ENCODE measurements at regions of chr17 and their contacts with region 1.

Region 1: DNA sequence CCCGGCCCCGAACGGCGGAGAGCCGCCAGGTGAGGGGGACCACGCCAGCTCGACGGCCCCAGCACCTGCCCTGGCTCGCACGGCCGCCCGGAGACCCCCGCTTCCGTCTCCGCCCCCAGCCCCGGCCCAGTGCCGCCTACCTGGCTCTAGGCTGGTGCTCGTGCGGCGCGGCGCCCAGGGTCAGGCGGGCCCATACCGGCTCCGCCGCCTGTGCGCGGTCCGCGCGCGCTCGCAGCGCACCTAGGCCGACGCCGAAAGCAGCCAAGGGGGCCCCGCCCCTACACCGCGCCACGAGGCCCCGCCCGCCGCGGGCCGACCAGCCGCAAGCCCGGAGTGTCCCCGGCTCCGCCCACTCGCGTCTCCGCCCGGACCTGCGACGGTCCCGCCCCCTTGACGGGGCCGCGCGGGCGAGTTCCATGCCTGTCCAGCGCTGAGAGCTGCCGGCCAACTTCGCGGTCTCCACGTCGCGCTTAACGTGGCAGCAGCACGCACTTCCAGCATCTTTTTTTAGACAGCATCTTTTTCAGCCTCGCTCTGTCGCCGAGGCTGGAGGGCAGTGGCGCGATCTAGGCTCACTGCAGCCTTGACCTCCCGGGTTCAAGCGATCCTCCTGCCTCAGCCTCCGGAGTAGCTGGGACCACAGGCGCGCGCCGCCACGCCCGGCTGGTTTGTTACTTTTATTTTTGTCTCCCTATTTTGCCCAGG is at the start of gene SLC25A39:
- DNase-seq: peak; percentile 95
- H3K4me3 Mint-ChIP-seq: peak within 1 kb of the TSS; percentile 87
- H3K27ac Mint-ChIP-seq: peak within 1 kb of the TSS; percentile 89
- H3K4me1 Mint-ChIP-seq: peaks cover 4% of the 10 kb centered on the region
- H3K27me3 Mint-ChIP-seq: no peaks in the 10 kb centered on the region
- total RNA-seq, gene SLC25A39: 132 and 141 TPM in 2 replicates

Region 2: DNA sequence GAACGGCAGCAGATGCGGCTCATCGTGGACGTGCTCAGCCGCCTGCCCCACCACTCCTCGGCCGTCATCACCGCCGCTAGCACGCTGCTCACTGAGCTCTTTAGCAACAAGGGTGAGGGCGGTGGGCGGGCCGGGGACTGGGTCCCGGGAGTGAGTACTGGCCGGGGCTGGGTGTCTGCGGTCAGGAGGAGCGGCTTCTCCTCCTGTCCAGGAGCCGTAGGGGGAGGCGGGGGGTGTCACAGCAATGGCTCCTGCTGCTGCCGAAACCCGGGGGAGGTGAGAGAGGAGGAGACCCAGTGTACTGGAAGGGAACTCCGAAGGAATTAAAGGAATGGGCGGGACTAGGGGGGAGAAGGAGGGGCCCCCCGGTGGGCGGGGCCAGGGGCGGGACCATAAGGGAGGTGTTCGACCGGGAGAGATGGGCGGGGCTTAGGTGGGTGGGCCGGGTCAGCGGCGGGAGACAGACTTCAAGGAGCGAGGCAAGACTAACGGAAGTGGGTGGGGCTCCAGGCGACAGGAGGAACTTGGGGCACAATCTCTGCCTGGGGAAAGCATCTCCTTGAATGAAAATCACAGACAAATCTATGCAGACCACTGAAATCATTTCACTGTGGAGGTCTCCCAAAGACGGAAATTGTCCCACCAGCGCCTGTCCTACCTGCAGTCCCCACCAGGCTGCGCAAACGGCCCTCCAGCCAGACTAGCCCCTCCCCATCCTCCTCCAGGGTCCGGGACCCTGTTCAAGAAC is 318.0 kb before region 1 on chr17:
- intact Hi-C with region 1: loop called (anchors 5 kb)
- DNase-seq: peak; percentile 87
- H3K4me3 Mint-ChIP-seq: peak overlapping the region; percentile 81
- H3K27ac Mint-ChIP-seq: peak overlapping the region; percentile 33
- H3K4me1 Mint-ChIP-seq: peaks cover 13% of the 10 kb centered on the region
- H3K27me3 Mint-ChIP-seq: peaks cover 21% of the 10 kb centered on the region

Region 3: GRCh38 chr17:44123356-44124117 is 201.2 kb before region 1 on chr17 and contains the start of gene HDAC5:
- intact Hi-C with region 1: loop called (anchors 1 kb)
- DNase-seq: peak; percentile 93
- H3K4me3 Mint-ChIP-seq: peak within 1 kb of the TSS; percentile 90
- H3K27ac Mint-ChIP-seq: peak within 1 kb of the TSS; percentile 95
- H3K4me1 Mint-ChIP-seq: peaks cover 17% of the 10 kb centered on the region
- H3K27me3 Mint-ChIP-seq: peaks cover 9% of the 10 kb centered on the region
- total RNA-seq, gene HDAC5: 18.7 and 19.9 TPM in 2 replicates

Region 4: GRCh38 chr17:44141717-44142285 is 182.9 kb before region 1 on chr17 and contains the start of gene HROB:
- intact Hi-C with region 1: loop called (anchors 1 kb)
- DNase-seq: peak; percentile 97
- H3K4me3 Mint-ChIP-seq: peak within 1 kb of the TSS; percentile 91
- H3K27ac Mint-ChIP-seq: peak within 1 kb of the TSS; percentile 94
- H3K4me1 Mint-ChIP-seq: peaks cover 15% of the 10 kb centered on the region
- H3K27me3 Mint-ChIP-seq: no peaks in the 10 kb centered on the region
- total RNA-seq, gene HROB: 20.7 and 24.1 TPM in 2 replicates

Region 5: GRCh38 chr17:44210342-44211192 is 114.2 kb before region 1 on chr17:
- intact Hi-C with region 1: loop called (anchors 1 kb)
- DNase-seq: peak; percentile 91
- H3K4me3 Mint-ChIP-seq: peak overlapping the region; percentile 75
- H3K27ac Mint-ChIP-seq: peak overlapping the region; percentile 88
- H3K4me1 Mint-ChIP-seq: peaks cover 23% of the 10 kb centered on the region
- H3K27me3 Mint-ChIP-seq: no peaks in the 10 kb centered on the region

Region 6: DNA sequence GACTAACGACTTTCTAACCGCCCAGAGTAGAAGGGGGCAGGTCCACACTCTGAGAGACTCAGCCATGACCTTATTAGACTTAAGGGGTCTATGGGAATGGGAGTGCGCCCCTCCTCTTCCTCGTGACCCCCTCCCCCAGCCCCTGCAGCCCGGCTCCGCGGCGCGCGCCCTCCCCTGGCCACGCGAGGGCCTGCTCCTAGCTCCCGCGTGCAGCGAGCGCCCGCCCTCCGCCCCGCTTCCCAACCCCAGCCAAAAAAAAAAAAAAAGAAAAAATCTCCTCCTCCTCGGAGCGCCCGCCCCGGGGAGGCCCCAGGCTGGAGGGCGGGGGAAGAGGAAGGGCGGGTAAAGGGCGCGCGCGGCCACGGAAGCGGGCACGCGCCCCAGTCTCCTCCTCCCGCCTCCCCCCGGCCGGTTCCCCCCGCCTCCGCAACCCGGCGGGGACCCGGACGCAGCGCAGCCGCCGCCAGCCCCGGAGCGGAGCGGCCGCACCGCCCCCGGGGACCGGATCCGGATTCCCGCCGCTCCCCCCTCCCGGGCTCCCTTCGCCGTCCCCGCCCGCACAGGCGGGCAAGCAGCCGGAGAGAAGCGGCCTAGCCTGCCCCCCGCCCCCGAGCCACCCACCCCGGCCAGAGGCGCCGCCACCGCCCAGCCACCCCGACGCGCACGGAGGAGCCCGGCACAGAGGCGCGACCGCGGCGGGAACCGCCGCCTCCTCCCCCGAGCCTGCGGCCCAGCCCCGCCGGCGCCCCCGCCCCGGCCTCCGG is 106.2 kb before region 1 on chr17:
- intact Hi-C with region 1: loop called (anchors 2 kb)
- DNase-seq: peak; percentile 86
- H3K4me3 Mint-ChIP-seq: peak overlapping the region; percentile 97
- H3K27ac Mint-ChIP-seq: peak overlapping the region; percentile 93
- H3K4me1 Mint-ChIP-seq: peaks cover 38% of the 10 kb centered on the region
- H3K27me3 Mint-ChIP-seq: no peaks in the 10 kb centered on the region

Measured in activated T-helper 2 cell treated with anti-CD3 and anti-CD28 coated beads, Interferon-gamma antibody, Interleukin-2, Interleukin-4, amounts not matched to agents 10 μg/mL and 5 μg/mL and 100 μg/mL, durations not matched to agents 14 hours and 24 hours and 36 hours (primary cell).